ENCODE measurements at regions of chr20 and their contacts with region 1.

Region 1: DNA sequence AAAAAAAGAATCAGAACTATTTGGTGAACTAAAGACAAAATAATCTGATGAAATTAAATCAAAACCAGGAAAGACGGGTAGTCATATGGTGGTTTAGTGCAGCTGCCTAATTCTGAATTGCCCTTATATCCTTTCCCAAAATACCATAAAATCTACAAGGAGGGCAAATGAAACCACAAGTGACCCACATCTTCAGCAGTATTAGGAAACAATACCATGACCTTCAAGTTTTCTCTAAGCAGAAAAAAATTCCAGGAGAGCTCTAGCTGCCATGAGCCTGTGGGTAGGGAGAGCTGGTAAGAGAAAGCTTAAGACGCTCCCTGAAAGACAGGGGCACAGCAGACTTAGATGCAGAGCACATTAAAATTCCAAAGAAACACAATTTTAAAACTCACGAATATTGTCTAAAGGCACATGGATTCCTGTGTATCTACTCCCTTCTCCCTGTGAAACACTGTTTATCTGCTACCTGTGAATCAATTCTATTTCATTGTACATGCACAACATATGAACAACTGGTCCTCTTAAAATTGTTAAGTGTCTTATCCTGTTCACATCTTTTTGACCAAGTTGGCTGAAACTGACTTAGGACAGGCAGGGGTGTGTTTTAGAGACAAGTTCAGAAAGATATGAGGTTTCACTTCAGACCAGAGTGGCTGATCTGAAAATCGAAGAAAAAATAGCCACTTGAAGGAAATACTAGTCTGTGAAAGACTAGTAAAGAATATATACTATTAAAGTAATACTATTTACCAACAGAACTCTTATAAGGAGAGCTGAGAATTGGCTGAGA is 153.6 kb upstream of the SHLD1 start:
- DNase-seq: peak; percentile 26
- CTCF ChIP-seq: no peak

Region 2: DNA sequence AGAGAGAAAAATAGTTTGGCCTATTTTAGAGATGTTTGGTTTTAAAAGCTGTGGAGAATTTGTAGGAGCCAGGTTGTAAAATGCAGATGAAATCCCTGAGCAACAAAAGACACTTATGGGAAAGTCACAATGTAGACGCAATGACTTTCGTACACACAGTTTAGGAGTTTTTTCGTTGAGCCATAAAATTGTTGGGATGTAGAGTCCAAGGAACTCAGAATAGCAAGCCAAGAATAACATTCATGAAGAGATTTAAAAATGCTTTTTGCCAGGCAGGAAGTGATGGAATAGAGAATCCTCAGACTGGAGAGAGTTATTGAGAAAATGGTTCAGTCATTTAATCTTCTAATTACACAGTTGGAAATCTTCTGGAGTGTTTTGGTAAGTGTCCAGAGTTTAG is 268.3 kb before region 1 on chr20:
- in situ Hi-C with region 1: no loop called
- DNase-seq: no peak
- CTCF ChIP-seq: no peak

Region 3: DNA sequence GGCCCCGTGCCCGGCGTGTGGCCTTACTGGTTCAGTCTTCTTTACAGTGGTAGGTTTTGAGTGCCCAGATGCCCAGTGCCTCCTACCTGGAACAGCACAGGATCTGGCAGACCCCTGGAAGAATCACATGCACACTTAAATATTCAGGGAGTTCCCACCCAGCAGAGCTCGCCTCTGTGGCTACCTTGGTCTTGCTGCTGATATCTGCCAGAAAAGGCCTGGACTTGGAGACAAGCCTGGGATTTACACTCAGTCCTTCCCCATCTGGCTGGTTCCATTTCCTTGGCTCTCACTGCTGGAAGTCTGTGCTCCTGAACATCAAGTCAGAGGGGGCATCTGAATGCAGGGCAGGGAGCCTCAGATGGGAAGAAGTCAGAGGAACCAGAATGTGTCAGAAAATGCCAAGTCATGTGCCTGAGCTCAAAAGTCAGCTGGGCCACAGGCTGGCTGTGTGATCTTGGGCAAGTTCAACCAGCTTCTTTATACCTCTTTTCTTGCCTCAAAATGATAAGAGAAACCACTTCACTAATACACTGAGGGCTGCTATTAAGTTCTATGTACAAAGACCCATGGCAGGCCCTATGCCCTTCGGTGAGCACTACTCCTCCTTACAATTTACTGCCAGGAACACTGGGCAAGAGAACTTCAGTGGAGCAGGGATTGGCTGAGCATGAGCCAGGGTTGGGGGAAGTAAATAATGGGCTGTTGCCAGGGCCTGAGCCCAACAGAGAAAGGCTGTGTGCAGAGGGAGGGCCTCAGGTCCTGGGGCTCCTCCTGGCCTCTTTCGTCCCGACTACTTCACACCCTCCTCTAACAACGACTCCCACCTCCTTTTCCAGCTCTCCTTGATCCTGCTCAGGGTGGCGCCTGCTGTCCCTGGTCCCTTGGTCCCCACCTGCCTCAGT is 121.7 kb before region 1 on chr20:
- in situ Hi-C with region 1: no loop called
- DNase-seq: no peak
- CTCF ChIP-seq: no peak

Region 4: GRCh38 chr20:5642155-5642981 is 45.8 kb after region 1 on chr20:
- in situ Hi-C with region 1: loop called (anchors 10 kb)
- DNase-seq: no peak
- CTCF ChIP-seq: no peak

Region 5: GRCh38 chr20:6115221-6115895 is 518.8 kb after region 1 on chr20:
- in situ Hi-C with region 1: no loop called
- DNase-seq: no peak
- CTCF ChIP-seq: no peak

Region 6: DNA sequence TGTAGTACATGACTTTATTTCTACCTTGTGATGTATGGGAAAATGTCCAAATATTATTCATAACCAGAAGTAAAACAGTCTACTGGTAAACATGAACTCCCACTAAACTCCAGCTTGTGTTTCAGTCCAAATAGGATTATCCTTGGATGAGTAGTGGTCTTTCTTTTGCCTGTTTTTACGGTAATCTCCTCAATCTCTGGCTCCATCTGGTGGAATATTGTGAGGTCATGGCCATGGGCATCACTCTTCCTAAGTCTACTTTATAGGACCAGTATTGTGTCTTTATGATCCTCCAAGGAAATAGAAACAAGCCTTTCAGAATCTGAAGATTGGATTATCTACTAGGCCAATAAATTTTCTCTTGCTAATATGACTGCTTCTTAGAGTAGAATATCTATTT is 1675.9 kb after region 1 on chr20:
- in situ Hi-C with region 1: no loop called
- DNase-seq: no peak
- CTCF ChIP-seq: no peak

Measured in GM13977 (cell line).